Activated CD4-positive, alpha-beta T cell treated with anti-CD3 and anti-CD28 coated beads for 36 hours (primary cell): ENCODE measurements at regions of chr14 and their contacts with region 1.

Region 1: GRCh38 chr14:103520657-103521437 is 1.8 kb downstream of the CKB start:
- DNase-seq: peak; percentile 74
- ATAC-seq: peak; percentile 45
- H3K4me3 Mint-ChIP-seq: peak overlapping the region; percentile 39
- H3K27ac Mint-ChIP-seq: no peak overlapping the region
- H3K4me1 Mint-ChIP-seq: peaks cover 10% of the 10 kb centered on the region
- H3K27me3 Mint-ChIP-seq: peaks cover 12% of the 10 kb centered on the region

Region 2: DNA sequence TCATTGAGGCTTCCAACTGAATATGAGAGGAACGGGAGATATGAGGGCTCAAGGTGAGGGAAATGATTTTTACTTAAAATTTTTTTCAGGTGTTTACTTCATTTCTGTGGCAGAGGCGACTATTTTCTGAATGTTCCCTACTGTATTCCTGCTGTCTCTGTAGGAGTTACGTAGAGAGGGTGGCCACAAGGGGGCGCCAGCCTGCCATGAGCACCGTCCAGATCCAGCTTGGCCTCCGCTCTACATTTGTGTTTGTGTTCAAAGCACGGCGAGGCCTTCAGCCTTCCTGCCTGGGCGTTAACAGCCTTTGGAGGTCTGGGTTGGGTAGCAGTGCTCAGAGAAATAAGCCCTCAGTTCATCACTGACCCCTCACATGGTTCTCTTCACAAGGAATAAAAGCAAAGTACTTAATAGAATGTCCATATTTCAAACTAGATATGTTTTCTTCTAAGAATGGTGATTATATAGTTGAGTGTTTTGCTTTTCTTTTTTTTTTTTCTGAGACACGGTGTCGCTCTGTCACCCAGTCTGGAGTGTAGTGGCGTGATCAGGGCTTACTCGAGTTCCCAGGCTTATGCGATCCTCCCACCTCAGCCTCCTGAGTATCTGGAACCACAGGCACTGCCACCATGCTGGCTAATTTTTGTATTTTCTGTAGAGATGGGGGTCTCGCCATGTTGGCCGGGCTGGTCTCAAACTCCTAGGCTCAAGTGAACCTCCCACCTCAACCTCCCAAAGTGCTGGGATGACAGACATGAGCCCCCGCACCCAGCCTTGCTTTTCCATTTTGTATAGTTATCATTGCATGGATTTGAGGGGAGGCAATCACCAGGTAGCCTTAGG is 20.5 kb before region 1 on chr14:
- CTCF ChIA-PET with region 1: interaction called, 21 read pairs
- POLR2A ChIA-PET with region 1: no interaction called
- intact Hi-C with region 1: no loop called
- DNase-seq: peak; percentile 91
- ATAC-seq: peak; percentile 87
- H3K4me3 Mint-ChIP-seq: no peak overlapping the region
- H3K27ac Mint-ChIP-seq: peak overlapping the region; percentile 55
- H3K4me1 Mint-ChIP-seq: peaks cover 19% of the 10 kb centered on the region
- H3K27me3 Mint-ChIP-seq: no peaks in the 10 kb centered on the region

Region 3: GRCh38 chr14:103546652-103547454 is 26.0 kb after region 1 on chr14:
- CTCF ChIA-PET with region 1: interaction called, 5 read pairs
- POLR2A ChIA-PET with region 1: no interaction called
- intact Hi-C with region 1: loop called (anchors 1 kb)
- DNase-seq: peak; percentile 85
- ATAC-seq: peak; percentile 85
- H3K4me3 Mint-ChIP-seq: no peak overlapping the region
- H3K27ac Mint-ChIP-seq: no peak overlapping the region
- H3K4me1 Mint-ChIP-seq: no peaks in the 10 kb centered on the region
- H3K27me3 Mint-ChIP-seq: no peaks in the 10 kb centered on the region

Region 4: GRCh38 chr14:103594265-103594664 is 73.4 kb after region 1 on chr14:
- CTCF ChIA-PET with region 1: no interaction called
- POLR2A ChIA-PET with region 1: no interaction called
- intact Hi-C with region 1: no loop called
- DNase-seq: no peak
- ATAC-seq: no peak
- H3K4me3 Mint-ChIP-seq: no peak overlapping the region
- H3K27ac Mint-ChIP-seq: no peak overlapping the region
- H3K4me1 Mint-ChIP-seq: peaks cover 6% of the 10 kb centered on the region
- H3K27me3 Mint-ChIP-seq: no peaks in the 10 kb centered on the region